Heart left ventricle (tissue), 16 donors: ENCODE measurements at regions of chr16 and their contacts with region 1.

Region 1: DNA sequence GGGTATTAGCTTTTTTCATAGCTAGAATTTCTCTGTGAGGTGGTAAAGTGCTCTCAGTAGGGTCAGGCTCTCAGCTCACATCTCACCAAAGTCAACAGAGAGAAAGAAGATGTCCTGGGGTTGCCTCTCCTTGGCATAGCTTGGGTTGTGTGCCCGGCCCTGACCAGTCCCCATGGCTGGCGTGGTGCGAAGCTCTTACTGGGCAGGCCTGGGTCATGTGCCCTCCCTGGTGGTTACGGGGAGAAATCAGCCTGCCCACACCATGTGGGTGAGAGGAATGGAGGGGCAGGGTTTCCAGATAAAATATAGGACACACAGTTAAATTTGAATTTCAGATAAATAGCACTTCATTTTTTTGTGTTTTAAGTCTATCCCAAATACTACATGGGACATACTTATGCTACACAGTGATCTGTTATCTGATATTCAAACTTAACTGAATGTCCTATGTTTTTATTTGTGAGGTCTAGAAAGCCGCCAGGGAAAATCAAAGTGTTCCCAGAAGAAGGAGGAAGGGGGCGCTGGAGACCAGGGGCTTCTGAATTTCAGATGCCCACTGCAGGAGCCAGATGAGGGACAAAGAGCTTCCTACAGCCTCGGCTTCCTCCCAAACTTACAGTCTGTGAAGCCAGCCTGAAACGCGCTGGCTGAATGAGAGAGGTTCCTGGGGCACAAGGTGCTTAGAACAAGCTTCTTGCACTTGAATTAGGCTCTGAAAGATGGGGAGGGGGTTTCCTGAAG is 45.4 kb downstream of the NKD1 start:
- DNase-seq: peak in 1 of 5 donors; percentile 41
- ATAC-seq: no peak
- H3K4me3 ChIP-seq: no peak overlapping the region
- H3K27ac ChIP-seq: peak overlapping the region in 1 of 12 donors; percentile 53
- H3K4me1 ChIP-seq: peaks cover 0 to 19% (median 10%) of the 10 kb centered on the region in 12 donors
- H3K27me3 ChIP-seq: no peaks in the 10 kb centered on the region
- CTCF ChIP-seq: peak in 9 of 12 donors; percentile 15 to 51 (median 39)
- POLR2A ChIP-seq: no peak

Region 2: GRCh38 chr16:50627419-50627818 is 33.8 kb after region 1 on chr16:
- intact Hi-C with region 1: loop called in 1 of 10 experiments (anchors 2 kb)
- DNase-seq: peak in 4 of 5 donors; percentile 52 to 74 (median 66)
- ATAC-seq: peak; percentile 79 to 90 (median 86)
- H3K4me3 ChIP-seq: no peak overlapping the region
- H3K27ac ChIP-seq: peak overlapping the region in 1 of 12 donors; percentile 36
- H3K4me1 ChIP-seq: peaks cover 0 to 12% (median 8%) of the 10 kb centered on the region in 12 donors
- H3K27me3 ChIP-seq: no peaks in the 10 kb centered on the region
- CTCF ChIP-seq: peak in 10 of 12 donors; percentile 16 to 59 (median 41)
- POLR2A ChIP-seq: no peak

Region 3: GRCh38 chr16:50735629-50736122 is 142.1 kb after region 1 on chr16:
- intact Hi-C with region 1: loop called in 1 of 10 experiments (anchors 10 kb)
- DNase-seq: no peak
- ATAC-seq: no peak
- H3K4me3 ChIP-seq: no peak overlapping the region
- H3K27ac ChIP-seq: no peak overlapping the region
- H3K4me1 ChIP-seq: no peaks in the 10 kb centered on the region
- H3K27me3 ChIP-seq: no peaks in the 10 kb centered on the region
- CTCF ChIP-seq: no peak
- POLR2A ChIP-seq: no peak